Activated CD8-positive, alpha-beta T cell treated with anti-CD3 and anti-CD28 coated beads for 36 hours (primary cell): ENCODE measurements at regions of chr19 and their contacts with region 1.

Region 1: GRCh38 chr19:3434712-3435553 is 45.4 kb downstream of the SMIM24 start:
- DNase-seq: peak; percentile 97
- ATAC-seq: peak; percentile 96
- H3K4me3 Mint-ChIP-seq: peak overlapping the region; percentile 86
- H3K27ac Mint-ChIP-seq: peak overlapping the region; percentile 98
- H3K4me1 Mint-ChIP-seq: peaks cover 14% of the 10 kb centered on the region
- H3K27me3 Mint-ChIP-seq: no peaks in the 10 kb centered on the region
- CTCF ChIP-seq: no peak

Region 2: GRCh38 chr19:3324321-3324856 is 110.5 kb before region 1 on chr19:
- CTCF ChIA-PET with region 1: interaction called, 19 read pairs
- POLR2A ChIA-PET with region 1: no interaction called
- intact Hi-C with region 1: loop called (anchors 5 kb)
- DNase-seq: peak; percentile 88
- ATAC-seq: peak; percentile 79
- H3K4me3 Mint-ChIP-seq: no peak overlapping the region
- H3K27ac Mint-ChIP-seq: no peak overlapping the region
- H3K4me1 Mint-ChIP-seq: no peaks in the 10 kb centered on the region
- H3K27me3 Mint-ChIP-seq: peaks cover 10% of the 10 kb centered on the region
- CTCF ChIP-seq: peak; percentile 86